ENCODE measurements at regions of chr9 and their contacts with region 1.

Region 1: GRCh38 chr9:36328798-36329411 is 70.7 kb upstream of the GNE start:
- DNase-seq: no peak

Region 2: DNA sequence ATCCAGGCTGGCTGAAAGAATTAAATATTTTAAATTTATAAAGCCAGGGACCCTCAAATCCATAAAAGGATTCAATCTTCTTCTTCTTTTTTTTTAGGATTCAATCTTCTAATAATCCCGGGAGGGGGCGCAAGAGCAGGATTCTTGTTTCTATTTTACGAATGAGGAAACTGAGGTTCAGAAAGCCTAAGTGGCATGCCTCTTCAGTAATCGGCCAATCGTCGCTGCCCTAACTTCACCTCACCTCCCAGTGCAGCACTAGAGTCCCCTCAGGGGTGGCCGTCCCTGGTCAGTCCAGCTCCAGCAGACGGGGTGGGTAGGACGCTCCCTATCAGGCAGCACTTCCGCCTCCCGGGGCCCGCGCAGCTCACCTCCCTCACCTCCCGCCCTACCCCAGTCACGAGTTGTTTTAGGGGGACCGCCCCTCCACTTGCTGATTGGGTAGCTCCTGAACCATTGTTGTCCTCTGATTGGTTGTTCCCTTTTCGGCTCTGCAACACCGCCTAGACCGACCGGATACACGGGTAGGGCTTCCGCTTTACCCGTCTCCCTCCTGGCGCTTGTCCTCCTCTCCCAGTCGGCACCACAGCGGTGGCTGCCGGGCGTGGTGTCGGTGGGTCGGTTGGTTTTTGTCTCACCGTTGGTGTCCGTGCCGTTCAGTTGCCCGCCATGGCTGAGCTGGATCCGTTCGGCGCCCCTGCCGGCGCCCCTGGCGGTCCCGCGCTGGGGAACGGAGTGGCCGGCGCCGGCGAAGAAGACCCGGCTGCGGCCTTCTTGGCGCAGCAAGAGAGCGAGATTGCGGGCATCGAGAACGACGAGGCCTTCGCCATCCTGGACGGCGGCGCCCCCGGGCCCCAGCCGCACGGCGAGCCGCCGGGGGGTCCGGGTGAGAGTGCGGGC is 138.3 kb before region 1 on chr9 and contains the start of gene CLTA:
- intact Hi-C with region 1: loop called (anchors 2 kb)
- DNase-seq: peak; percentile 98
- total RNA-seq, gene CLTA: 58.3 TPM

Region 3: GRCh38 chr9:36245906-36246305 is 83.0 kb before region 1 on chr9:
- intact Hi-C with region 1: loop called (anchors 5 kb)
- DNase-seq: no peak

Measured in cardiac septum (tissue), 1 donor.